ENCODE measurements at regions of chr2 and their contacts with region 1.

Region 1: DNA sequence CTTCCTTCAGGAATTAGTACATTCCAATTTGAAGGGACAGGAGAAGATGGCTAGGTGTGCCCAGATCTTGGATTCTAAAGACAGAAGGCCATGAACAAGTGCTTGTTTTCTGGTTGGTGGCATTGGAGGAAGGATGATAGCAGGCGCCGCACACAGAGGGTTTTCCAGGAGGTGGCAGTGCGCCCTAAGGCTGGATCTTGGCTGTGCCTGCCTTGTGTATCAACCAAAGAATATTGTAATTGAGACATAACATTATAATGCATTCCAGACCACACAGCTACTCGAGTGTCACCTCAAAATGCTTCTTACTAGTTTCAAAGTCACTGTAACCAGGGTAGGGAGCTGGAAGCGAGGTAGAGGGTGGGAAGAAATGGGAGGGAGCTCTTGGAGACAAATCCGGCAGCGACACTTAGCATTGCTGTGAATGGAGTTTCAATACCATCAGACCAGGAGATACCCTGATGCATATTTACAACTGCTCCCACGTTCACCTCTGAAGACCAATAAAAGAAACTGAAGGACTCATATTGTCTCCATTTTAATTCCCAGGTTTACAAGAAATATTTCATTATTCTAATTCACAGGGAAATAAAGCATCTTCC is 42.5 kb downstream of the CPO start:
- DNase-seq: peak; percentile 78
- H3K4me3 ChIP-seq: no peak overlapping the region
- H3K27ac ChIP-seq: no peak overlapping the region
- H3K4me1 ChIP-seq: no peaks in the 10 kb centered on the region
- H3K27me3 ChIP-seq: no peaks in the 10 kb centered on the region
- CTCF ChIP-seq: peak; percentile 62 to 89 (median 81)
- POLR2A ChIP-seq: no peak

Region 2: DNA sequence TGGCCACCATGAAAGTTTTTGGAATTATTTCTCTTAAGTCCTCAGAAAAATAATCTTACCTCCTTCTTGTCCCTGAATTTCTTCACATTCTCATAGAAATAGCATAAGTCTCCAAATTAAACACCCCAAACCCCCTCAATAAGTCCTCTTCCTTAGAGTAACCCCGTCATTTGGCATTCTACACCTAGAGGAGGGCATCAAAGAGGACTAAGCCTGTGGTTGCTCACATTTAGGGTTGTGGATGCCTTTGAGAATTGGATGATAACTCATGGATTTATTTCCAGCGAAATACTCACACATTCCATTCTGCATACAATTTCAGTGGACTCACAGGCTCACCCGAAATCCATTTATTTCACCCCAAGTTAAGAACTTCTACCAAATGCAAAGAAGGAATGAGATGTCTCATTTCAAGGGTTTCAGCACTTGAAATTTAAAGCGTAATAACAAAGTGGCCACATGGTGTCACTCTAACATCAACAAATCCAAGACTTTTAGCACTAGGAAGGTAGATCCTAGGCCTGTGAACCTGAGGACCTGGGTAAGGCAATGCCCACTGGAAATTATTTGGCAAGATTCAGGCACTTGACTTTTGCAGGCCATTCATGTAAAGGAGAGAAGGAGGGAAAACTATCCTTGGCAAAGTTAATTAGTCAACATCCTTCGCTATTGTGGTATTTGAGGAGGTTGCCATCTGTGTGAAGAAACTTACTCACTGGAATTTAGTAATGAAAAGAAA is 288.3 kb before region 1 on chr2:
- intact Hi-C with region 1: loop called (anchors 10 kb)
- DNase-seq: peak; percentile 46
- H3K4me3 ChIP-seq: no peak overlapping the region
- H3K27ac ChIP-seq: no peak overlapping the region
- H3K4me1 ChIP-seq: no peaks in the 10 kb centered on the region
- H3K27me3 ChIP-seq: no peaks in the 10 kb centered on the region
- CTCF ChIP-seq: peak; percentile 8 to 67 (median 62)
- POLR2A ChIP-seq: no peak

Region 3: GRCh38 chr2:206800506-206801417 is 181.1 kb before region 1 on chr2:
- intact Hi-C with region 1: loop called (anchors 5 kb)
- DNase-seq: peak; percentile 57
- H3K4me3 ChIP-seq: no peak overlapping the region
- H3K27ac ChIP-seq: no peak overlapping the region
- H3K4me1 ChIP-seq: no peaks in the 10 kb centered on the region
- H3K27me3 ChIP-seq: no peaks in the 10 kb centered on the region
- CTCF ChIP-seq: peak; percentile 18 to 72 (median 60)
- POLR2A ChIP-seq: no peak

Region 4: DNA sequence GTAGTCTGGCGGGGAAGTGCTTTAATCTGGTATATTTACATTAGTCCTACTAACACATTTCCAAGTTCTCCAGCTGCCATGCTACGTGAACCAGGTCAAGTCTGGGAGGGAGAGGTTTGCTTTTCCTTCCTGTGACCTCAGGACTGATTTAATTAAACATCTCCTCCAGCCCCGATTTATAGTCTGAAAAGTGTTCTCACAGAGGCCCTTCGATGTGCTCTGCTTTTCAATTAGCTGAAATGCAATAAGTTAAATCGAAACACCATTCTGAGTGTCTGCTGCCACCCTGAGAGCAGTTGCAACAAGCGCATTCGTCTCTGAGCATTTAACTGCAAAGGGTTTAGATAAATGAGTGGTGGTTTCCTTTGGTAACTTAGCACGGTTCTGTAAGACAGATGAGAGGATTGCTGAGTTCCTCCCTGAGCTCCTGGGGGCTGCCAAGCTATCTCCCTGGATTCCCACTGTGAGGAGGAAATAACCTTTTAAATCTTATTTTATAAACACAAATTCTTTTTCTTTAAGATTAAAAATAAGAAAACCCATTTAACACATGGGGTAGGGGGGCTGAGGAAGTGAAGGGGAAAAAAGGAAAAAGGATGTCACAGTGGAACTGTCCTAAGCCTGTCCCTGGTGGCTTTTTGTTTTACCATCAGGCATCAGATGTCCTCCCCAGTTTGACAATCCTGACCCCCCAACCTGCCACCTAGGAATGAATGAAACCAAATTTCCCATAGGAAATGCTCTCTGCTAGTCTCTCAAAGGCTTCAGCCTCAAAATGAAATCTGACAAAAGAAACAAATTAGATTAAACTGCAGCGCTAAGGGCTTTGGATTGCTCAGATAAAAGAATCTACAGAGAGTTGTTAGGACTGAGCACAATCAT is 491.4 kb after region 1 on chr2:
- intact Hi-C with region 1: loop called (anchors 2 kb)
- DNase-seq: peak; percentile 21
- H3K4me3 ChIP-seq: no peak overlapping the region
- H3K27ac ChIP-seq: no peak overlapping the region
- H3K4me1 ChIP-seq: no peaks in the 10 kb centered on the region
- H3K27me3 ChIP-seq: no peaks in the 10 kb centered on the region
- CTCF ChIP-seq: peak in 3 of 4 experiments; percentile 21 to 58 (median 49)
- POLR2A ChIP-seq: no peak